ENCODE measurements at regions of chr14 and their contacts with region 1.

Region 1: DNA sequence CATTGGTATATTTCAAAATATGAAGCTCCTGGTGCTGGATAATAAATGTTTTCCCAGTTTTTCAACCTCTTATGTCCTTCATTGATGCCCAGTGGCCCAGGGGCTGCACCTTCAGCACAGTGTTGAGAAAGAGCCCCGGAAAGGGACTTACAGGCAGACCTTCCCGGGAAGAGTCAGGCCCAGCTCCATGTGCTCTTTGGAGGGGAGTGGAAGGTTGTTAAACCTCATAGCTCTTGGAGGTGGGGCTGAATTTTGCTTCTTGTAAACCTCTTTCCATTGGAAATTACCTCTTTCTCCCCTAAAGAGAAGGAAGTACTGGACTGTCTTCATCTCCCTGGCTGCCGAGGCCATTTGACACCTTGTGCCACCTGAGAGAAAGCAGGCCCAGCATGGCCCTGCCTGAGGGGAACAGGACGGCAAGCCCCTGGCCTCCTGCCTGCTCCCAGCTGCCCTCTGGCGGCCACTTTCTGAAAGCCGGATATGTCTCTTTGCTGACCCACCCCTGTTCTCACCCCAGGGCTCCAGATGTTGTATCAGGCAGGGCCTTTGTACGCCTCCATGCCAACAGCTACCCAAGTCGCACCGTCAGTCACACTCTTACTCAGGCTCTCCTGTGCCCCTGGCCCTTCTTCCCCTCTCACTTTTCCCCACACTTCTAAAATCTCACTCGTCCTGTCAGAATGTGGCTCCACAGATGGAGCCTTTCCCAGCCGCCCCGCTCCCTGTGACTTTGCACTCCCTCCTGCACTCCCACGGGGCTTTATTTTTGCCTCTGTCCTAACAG is 43.0 kb downstream of the EVL start:
- DNase-seq: peak; percentile 74
- H3K4me3 Mint-ChIP-seq: peak overlapping the region; percentile 47
- H3K27ac Mint-ChIP-seq: peak overlapping the region; percentile 93
- H3K4me1 Mint-ChIP-seq: peaks cover 76% of the 10 kb centered on the region
- H3K27me3 Mint-ChIP-seq: no peaks in the 10 kb centered on the region

Region 2: GRCh38 chr14:99971087-99971940 is 136.9 kb before region 1 on chr14:
- intact Hi-C with region 1: loop called (anchors 2 kb)
- DNase-seq: peak; percentile 68
- H3K4me3 Mint-ChIP-seq: peak overlapping the region; percentile 80
- H3K27ac Mint-ChIP-seq: no peak overlapping the region
- H3K4me1 Mint-ChIP-seq: peaks cover 13% of the 10 kb centered on the region
- H3K27me3 Mint-ChIP-seq: peaks cover 21% of the 10 kb centered on the region

Region 3: GRCh38 chr14:100056964-100057795 is 51.1 kb before region 1 on chr14:
- intact Hi-C with region 1: loop called (anchors 1 kb)
- DNase-seq: no peak
- H3K4me3 Mint-ChIP-seq: peak overlapping the region; percentile 62
- H3K27ac Mint-ChIP-seq: peak overlapping the region; percentile 75
- H3K4me1 Mint-ChIP-seq: peaks cover 69% of the 10 kb centered on the region
- H3K27me3 Mint-ChIP-seq: no peaks in the 10 kb centered on the region

Region 4: DNA sequence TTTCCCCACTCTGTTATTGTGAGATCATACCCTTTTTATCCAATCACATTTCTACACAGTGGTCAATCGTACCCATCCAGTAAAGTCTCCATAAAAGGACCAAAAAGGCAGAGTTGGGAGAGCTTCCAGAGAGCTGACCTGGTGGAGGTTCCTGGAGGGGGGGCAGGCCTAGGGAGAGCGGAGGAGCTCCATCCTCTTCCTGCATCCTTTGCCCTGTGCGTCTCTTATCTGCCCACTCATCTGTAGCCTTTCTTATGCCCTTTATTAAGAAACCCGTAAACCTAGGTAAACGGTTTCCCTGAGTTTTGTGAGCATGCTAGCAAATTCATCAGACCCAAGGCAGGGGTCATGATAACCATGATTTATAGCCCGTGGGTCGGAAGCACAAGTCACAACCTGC is 16.8 kb before region 1 on chr14:
- intact Hi-C with region 1: loop called (anchors 1 kb)
- DNase-seq: no peak
- H3K4me3 Mint-ChIP-seq: peak overlapping the region; percentile 34
- H3K27ac Mint-ChIP-seq: peak overlapping the region; percentile 79
- H3K4me1 Mint-ChIP-seq: peaks cover 82% of the 10 kb centered on the region
- H3K27me3 Mint-ChIP-seq: no peaks in the 10 kb centered on the region

Region 5: GRCh38 chr14:100096570-100096971 is 11.7 kb before region 1 on chr14:
- intact Hi-C with region 1: loop called (anchors 1 kb)
- DNase-seq: no peak
- H3K4me3 Mint-ChIP-seq: no peak overlapping the region
- H3K27ac Mint-ChIP-seq: peak overlapping the region; percentile 70
- H3K4me1 Mint-ChIP-seq: peaks cover 84% of the 10 kb centered on the region
- H3K27me3 Mint-ChIP-seq: no peaks in the 10 kb centered on the region